Activated CD4-positive, alpha-beta memory T cell treated with anti-CD3 and anti-CD28 coated beads, Interleukin-2, amount 10 ng/mL, durations not matched to agents 7 days and 5 days (primary cell): ENCODE measurements at regions of chr5 and their contacts with region 1.

Region 1: DNA sequence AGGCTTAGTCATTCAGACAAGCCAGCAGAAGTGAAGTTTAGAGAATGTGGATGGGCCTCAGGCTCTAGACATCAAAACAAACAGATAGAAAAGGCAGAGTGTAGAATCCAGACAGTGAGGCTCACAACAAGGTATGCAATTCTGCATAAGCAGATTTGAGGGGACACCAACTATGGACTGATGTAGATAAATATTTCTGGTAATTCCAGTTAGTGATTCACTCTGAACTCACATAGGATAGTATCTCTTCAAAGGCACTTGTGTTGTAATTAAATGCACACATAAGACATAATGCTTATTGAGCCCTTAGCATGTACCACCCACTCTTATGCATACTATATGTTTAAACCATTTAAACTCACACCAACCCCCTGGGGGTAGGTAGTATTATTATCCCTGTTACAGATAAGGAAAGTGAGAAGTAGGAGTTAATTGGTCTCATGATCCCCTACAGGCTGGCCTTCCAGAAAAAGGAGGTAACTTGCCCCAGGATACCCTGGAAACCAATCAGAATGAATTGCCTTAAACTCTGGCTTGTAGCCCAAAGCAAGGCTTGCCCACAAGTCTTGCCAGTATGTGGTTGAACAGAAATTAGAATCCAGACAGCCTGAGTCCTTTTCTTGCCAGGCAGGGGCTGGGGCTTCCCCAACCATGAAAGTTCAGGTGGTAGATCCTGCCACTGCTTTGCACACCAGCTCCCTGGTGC is 39.5 kb upstream of the HSPB3 start:
- DNase-seq: no peak
- H3K4me3 Mint-ChIP-seq: no peak overlapping the region
- H3K27ac Mint-ChIP-seq: no peak overlapping the region
- H3K4me1 Mint-ChIP-seq: no peaks in the 10 kb centered on the region
- H3K27me3 Mint-ChIP-seq: peaks cover 17% of the 10 kb centered on the region

Region 2: GRCh38 chr5:54243473-54244080 is 172.5 kb before region 1 on chr5:
- CTCF ChIA-PET with region 1: interaction called, 21 read pairs
- POLR2A ChIA-PET with region 1: no interaction called
- DNase-seq: peak; percentile 27
- H3K4me3 Mint-ChIP-seq: no peak overlapping the region
- H3K27ac Mint-ChIP-seq: no peak overlapping the region
- H3K4me1 Mint-ChIP-seq: no peaks in the 10 kb centered on the region
- H3K27me3 Mint-ChIP-seq: no peaks in the 10 kb centered on the region